Activated T-helper 1 cell treated with anti-CD3 and anti-CD28 coated beads, Interleukin-12 subunit alpha, Interleukin-12 subunit beta, Interleukin-2, Interleukin-4 antibody, amounts not matched to agents 30 ng/mL and 10 ng/mL and 1 ng/mL, durations not matched to agents 14 hours and 24 hours and 36 hours (primary cell): ENCODE measurements at regions of chr5 and their contacts with region 1.

Region 1: DNA sequence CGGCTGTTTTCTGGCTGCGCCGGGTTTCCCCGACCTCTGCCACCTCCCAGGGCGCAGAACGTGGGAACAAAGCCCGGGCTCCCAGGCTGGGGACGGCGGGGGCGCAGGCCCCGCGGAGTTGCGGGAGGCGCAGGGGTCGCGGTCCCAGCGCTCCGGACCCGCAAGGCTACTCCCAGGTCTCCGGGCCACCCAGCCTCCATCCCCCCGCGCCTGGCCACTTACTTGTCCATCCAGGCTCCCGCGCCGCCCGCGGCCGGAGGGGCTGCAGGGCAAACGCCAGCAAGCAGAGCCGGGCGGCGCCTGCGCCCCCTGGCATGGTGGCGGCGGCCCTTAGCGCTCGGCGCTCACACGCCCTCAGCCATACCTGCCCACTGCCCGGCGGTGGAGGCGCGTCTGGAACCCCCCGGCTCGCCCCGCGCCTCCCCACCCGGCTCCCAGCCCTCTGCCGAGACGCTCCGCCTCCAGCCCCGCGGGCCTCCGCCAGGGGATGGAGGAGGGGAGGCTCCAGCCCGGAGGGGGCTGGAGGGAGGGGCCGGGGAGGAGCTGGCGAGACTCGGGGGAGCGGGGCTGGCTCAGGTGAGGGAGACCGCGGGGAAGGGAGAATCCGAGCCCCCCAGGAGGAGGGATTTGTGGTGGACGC is at the start of gene ADAM19:
- DNase-seq: peak; percentile 58
- H3K4me3 Mint-ChIP-seq: peak within 1 kb of the TSS; percentile 96
- H3K27ac Mint-ChIP-seq: peak within 1 kb of the TSS; percentile 92
- H3K4me1 Mint-ChIP-seq: peaks cover 64% of the 10 kb centered on the region
- H3K27me3 Mint-ChIP-seq: no peaks in the 10 kb centered on the region
- total RNA-seq, gene ADAM19: 341 and 348 TPM in 2 replicates

Region 2: DNA sequence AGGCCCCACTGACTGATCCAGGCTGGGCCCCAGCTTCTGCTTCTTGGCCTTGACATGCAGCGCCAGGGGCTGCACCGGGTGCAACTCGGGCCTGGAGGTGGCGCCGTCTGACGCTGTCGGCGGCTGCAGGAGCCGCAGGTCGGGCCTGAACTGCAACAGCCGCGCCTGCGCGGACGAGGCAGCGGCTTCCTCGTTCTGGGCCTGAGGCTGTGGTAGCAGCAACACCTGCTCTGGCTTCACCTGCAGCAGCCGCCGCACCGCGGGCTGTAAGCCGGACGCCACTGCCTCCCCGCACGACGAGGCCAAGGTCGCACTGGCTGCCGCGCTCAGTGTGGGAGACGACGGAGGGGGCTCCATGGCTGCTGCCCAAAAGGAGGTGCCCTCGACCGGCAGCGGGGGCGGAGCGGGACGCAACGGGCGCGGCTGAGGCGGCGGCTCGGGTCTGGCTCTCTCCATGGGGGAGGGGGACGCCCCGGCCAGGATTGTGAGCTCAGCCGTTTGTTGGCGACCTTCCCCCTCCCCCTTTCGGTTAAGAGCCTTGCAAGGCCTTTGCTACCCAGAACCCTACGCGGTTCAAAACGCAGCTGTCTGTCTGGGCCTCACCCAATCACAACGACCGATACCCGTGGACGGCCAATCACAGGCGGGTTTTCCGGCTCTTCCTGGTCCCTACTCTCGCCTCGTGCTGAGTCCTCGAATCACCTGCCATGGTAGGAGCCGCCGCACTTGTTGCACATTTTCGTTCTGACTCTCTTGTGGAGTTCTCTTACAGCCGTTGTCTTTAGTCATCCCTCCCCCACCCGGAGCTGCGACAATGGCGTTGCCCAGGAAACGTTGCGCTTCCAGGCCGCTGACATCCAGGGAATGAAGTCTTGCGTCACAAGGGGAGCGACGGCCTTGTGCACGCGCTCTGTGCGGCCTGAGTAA is 76.4 kb after region 1 on chr5 and contains the start of gene SOX30:
- intact Hi-C with region 1: loop called (anchors 2 kb)
- DNase-seq: peak; percentile 75
- H3K4me3 Mint-ChIP-seq: peak within 1 kb of the TSS; percentile 80
- H3K27ac Mint-ChIP-seq: peak within 1 kb of the TSS; percentile 86
- H3K4me1 Mint-ChIP-seq: peaks cover 10% of the 10 kb centered on the region
- H3K27me3 Mint-ChIP-seq: no peaks in the 10 kb centered on the region
- total RNA-seq, gene SOX30: 0.12 and 0.29 TPM in 2 replicates